CD8-positive, alpha-beta memory T cell (primary cell): ENCODE measurements at regions of chr10 and their contacts with region 1.

Region 1: GRCh38 chr10:119199231-119199992 is 8.0 kb upstream of the GRK5 start:
- DNase-seq: peak in 3 of 5 donors; percentile 27 to 59 (median 49)
- H3K4me3 ChIP-seq: no peak overlapping the region
- H3K4me3 Mint-ChIP-seq: no peak overlapping the region
- H3K27ac ChIP-seq: no peak overlapping the region
- H3K27ac Mint-ChIP-seq: no peak overlapping the region
- H3K4me1 ChIP-seq: no peaks in the 10 kb centered on the region
- H3K4me1 Mint-ChIP-seq: peaks cover 0 to 13% (median 2%) of the 10 kb centered on the region in 3 donors
- H3K27me3 ChIP-seq: no peaks in the 10 kb centered on the region
- H3K27me3 Mint-ChIP-seq: peaks cover 3% of the 10 kb centered on the region in 2 donors

Region 2: GRCh38 chr10:119049361-119049760 is 150.1 kb before region 1 on chr10:
- CTCF ChIA-PET with region 1: no interaction called
- POLR2A ChIA-PET with region 1: no interaction called
- DNase-seq: no peak
- H3K4me3 ChIP-seq: no peak overlapping the region
- H3K4me3 Mint-ChIP-seq: no peak overlapping the region
- H3K27ac ChIP-seq: no peak overlapping the region
- H3K27ac Mint-ChIP-seq: peak overlapping the region in 1 of 8 donors; percentile 35
- H3K4me1 ChIP-seq: no peaks in the 10 kb centered on the region
- H3K4me1 Mint-ChIP-seq: peaks cover 26 to 46% (median 43%) of the 10 kb centered on the region in 3 donors
- H3K27me3 ChIP-seq: no peaks in the 10 kb centered on the region
- H3K27me3 Mint-ChIP-seq: no peaks in the 10 kb centered on the region

Region 3: DNA sequence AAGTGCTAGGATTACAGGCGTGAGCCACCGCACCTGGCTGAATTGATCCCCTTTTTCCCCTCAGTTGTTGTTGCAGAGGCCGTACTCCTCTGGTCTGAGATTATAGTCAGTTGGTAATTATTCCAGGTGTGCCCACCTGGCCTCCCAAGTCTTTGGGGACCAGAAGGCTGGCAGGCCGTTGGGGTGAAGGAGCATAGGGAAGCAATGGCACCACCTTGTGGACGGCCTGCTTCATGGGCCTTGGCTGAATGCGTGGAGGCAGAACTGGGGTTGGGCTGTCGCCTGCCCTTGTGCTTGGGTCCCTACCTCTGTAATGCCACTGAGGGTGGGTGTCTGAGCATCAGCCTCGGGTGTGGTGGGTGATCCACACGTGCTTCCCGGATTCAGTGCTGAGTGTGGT is 217.4 kb after region 1 on chr10:
- CTCF ChIA-PET with region 1: interaction called, 15 read pairs
- POLR2A ChIA-PET with region 1: no interaction called
- DNase-seq: peak; percentile 49 to 74 (median 52)
- H3K4me3 ChIP-seq: no peak overlapping the region
- H3K4me3 Mint-ChIP-seq: no peak overlapping the region
- H3K27ac ChIP-seq: no peak overlapping the region
- H3K27ac Mint-ChIP-seq: peak overlapping the region in 1 of 8 donors; percentile 57
- H3K4me1 ChIP-seq: no peaks in the 10 kb centered on the region
- H3K4me1 Mint-ChIP-seq: no peaks in the 10 kb centered on the region
- H3K27me3 ChIP-seq: no peaks in the 10 kb centered on the region
- H3K27me3 Mint-ChIP-seq: no peaks in the 10 kb centered on the region

Region 4: GRCh38 chr10:119445311-119445934 is 246.0 kb after region 1 on chr10:
- CTCF ChIA-PET with region 1: interaction called, 21 read pairs
- POLR2A ChIA-PET with region 1: no interaction called
- DNase-seq: peak; percentile 71 to 87 (median 78)
- H3K4me3 ChIP-seq: no peak overlapping the region
- H3K4me3 Mint-ChIP-seq: no peak overlapping the region
- H3K27ac ChIP-seq: no peak overlapping the region
- H3K27ac Mint-ChIP-seq: peak overlapping the region in 3 of 8 donors; percentile 32 to 47 (median 36)
- H3K4me1 ChIP-seq: peaks cover 4% of the 10 kb centered on the region
- H3K4me1 Mint-ChIP-seq: peaks cover 8 to 14% (median 9%) of the 10 kb centered on the region in 3 donors
- H3K27me3 ChIP-seq: no peaks in the 10 kb centered on the region
- H3K27me3 Mint-ChIP-seq: no peaks in the 10 kb centered on the region